Activated B cell treated with CpG ODN at 0.5 μM for 24 hours (primary cell): ENCODE measurements at regions of chr1 and their contacts with region 1.

Region 1: GRCh38 chr1:172532700-172533509 is at the start of gene SUCO:
- DNase-seq: peak; percentile 99
- ATAC-seq: peak; percentile 82
- H3K4me3 Mint-ChIP-seq: peak within 1 kb of the TSS; percentile 98
- H3K27ac Mint-ChIP-seq: peak within 1 kb of the TSS; percentile 99
- H3K4me1 Mint-ChIP-seq: peaks cover 48% of the 10 kb centered on the region
- H3K27me3 Mint-ChIP-seq: peaks cover 4% of the 10 kb centered on the region
- CTCF ChIP-seq: no peak
- total RNA-seq, gene SUCO: 35.2 and 47.1 TPM in 2 replicates

Region 2: GRCh38 chr1:171741872-171742576 is 790.9 kb before region 1 on chr1 and contains the start of gene VAMP4:
- CTCF ChIA-PET with region 1: no interaction called
- POLR2A ChIA-PET with region 1: interaction called, 11 read pairs
- intact Hi-C with region 1: loop called (anchors 1 kb)
- DNase-seq: peak; percentile 82
- ATAC-seq: peak; percentile 93
- H3K4me3 Mint-ChIP-seq: peak within 1 kb of the TSS; percentile 100
- H3K27ac Mint-ChIP-seq: peak within 1 kb of the TSS; percentile 100
- H3K4me1 Mint-ChIP-seq: peaks cover 37% of the 10 kb centered on the region
- H3K27me3 Mint-ChIP-seq: no peaks in the 10 kb centered on the region
- CTCF ChIP-seq: no peak
- total RNA-seq, gene VAMP4: 9.0 and 10.5 TPM in 2 replicates

Region 3: GRCh38 chr1:172180501-172181285 is 352.2 kb before region 1 on chr1:
- CTCF ChIA-PET with region 1: no interaction called
- POLR2A ChIA-PET with region 1: interaction called, 3 read pairs
- intact Hi-C with region 1: loop called (anchors 1 kb)
- DNase-seq: no peak
- ATAC-seq: peak; percentile 76
- H3K4me3 Mint-ChIP-seq: peak overlapping the region; percentile 79
- H3K27ac Mint-ChIP-seq: peak overlapping the region; percentile 97
- H3K4me1 Mint-ChIP-seq: peaks cover 53% of the 10 kb centered on the region
- H3K27me3 Mint-ChIP-seq: no peaks in the 10 kb centered on the region
- CTCF ChIP-seq: no peak

Region 4: DNA sequence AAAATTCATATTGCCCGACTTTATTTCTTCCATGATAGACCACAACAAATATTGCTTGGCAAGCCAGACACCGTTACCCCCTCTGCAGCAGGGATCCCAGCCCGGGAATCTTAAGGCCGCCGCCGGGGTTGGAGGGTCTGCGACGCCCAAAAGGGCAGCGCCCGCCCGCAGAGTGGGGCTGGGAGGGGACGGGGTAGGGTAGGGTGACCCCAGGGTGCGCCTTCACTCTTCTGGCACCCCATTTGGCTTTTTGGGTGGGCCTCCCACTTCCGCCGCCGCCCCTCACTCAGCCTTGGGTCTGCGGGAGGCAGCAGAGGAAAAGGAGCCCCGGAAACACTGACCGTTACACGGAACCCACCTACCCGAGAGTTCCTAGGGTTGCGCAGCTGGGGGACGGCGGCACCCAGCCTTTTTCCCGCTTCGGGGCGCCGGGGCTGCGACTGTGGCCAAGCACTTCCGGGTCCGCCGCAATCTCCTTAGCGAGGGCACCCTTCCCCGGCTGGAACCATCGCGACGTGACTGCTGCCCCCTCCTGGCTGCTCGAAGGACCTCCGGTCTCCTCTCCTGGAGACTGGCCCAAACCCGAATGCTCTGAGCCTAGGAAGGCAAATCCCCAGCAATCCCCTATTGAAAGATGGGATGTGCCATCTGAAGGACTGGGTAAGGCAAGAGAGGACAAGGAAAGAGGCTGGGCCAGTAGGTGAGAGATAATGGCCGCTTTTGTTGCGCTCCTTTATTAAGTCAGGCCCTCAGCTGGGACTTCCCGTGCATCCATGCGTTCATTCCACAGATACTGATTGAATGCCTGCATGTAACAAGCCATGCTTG is 89.1 kb before region 1 on chr1 and contains the start of gene PIGC:
- CTCF ChIA-PET with region 1: interaction called, 3 read pairs
- POLR2A ChIA-PET with region 1: interaction called, 3 read pairs
- intact Hi-C with region 1: loop called (anchors 1 kb)
- DNase-seq: peak; percentile 80
- ATAC-seq: peak; percentile 99
- H3K4me3 Mint-ChIP-seq: peak within 1 kb of the TSS; percentile 90
- H3K27ac Mint-ChIP-seq: peak within 1 kb of the TSS; percentile 84
- H3K4me1 Mint-ChIP-seq: peaks cover 36% of the 10 kb centered on the region
- H3K27me3 Mint-ChIP-seq: no peaks in the 10 kb centered on the region
- CTCF ChIP-seq: no peak
- total RNA-seq, gene PIGC: 24.2 TPM in 2 replicates

Region 5: DNA sequence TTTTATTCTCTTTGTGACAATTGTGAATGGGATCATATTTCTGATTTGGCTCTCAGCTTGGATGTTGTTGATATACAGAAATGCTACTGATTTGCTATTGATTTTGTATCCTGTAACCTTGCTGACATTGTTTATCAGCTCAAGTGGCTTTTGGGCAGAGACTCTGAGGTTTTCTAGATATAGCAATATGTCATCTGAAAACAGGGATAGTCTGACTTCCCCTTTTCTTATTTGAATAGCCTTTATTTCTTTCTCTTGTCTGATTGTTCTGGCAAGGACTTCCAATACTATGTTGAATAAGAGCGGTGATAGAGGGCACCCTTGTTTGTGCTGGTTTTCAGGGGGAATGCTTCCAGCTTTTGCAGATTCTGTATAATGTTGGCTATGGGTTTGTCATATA is 276.8 kb after region 1 on chr1:
- CTCF ChIA-PET with region 1: no interaction called
- POLR2A ChIA-PET with region 1: no interaction called
- intact Hi-C with region 1: no loop called
- DNase-seq: no peak
- ATAC-seq: no peak
- H3K4me3 Mint-ChIP-seq: no peak overlapping the region
- H3K27ac Mint-ChIP-seq: no peak overlapping the region
- H3K4me1 Mint-ChIP-seq: peaks cover 21% of the 10 kb centered on the region
- H3K27me3 Mint-ChIP-seq: no peaks in the 10 kb centered on the region
- CTCF ChIP-seq: no peak

Region 6: DNA sequence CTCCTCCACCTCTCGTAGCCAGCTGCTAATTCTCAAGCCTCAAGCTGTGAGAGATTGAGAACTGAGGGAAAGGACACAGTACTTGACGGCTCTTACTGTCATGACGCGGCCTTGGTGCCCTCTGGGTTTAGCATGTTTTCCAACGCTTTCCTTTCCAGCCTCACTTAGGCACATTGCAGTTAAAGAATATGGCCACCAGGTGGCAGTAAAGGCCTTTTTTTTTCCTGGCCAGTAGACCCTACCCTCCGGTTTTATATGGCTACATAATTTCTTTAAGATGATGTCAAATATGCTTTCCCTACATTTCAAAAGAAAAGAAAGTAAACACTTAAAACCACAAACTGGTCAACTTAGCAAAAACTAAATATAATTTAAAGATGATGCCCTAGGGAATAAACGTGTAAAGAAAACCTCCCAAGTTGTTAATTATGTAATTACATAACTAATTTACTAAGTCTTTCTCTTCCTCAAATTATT is 887.5 kb after region 1 on chr1:
- CTCF ChIA-PET with region 1: no interaction called
- POLR2A ChIA-PET with region 1: no interaction called
- intact Hi-C with region 1: loop called (anchors 2 kb)
- DNase-seq: no peak
- ATAC-seq: peak; percentile 21
- H3K4me3 Mint-ChIP-seq: peak overlapping the region; percentile 60
- H3K27ac Mint-ChIP-seq: peak overlapping the region; percentile 95
- H3K4me1 Mint-ChIP-seq: peaks cover 63% of the 10 kb centered on the region
- H3K27me3 Mint-ChIP-seq: no peaks in the 10 kb centered on the region
- CTCF ChIP-seq: no peak

Region 7: GRCh38 chr1:173824331-173825081 is 1291.6 kb after region 1 on chr1 and contains the starts of genes CENPL and DARS2:
- CTCF ChIA-PET with region 1: no interaction called
- POLR2A ChIA-PET with region 1: interaction called, 4 read pairs
- intact Hi-C with region 1: loop called (anchors 1 kb)
- DNase-seq: peak; percentile 80
- ATAC-seq: peak; percentile 89
- H3K4me3 Mint-ChIP-seq: peak within 1 kb of the TSS; percentile 95
- H3K27ac Mint-ChIP-seq: peak within 1 kb of the TSS; percentile 97
- H3K4me1 Mint-ChIP-seq: peaks cover 28% of the 10 kb centered on the region
- H3K27me3 Mint-ChIP-seq: no peaks in the 10 kb centered on the region
- CTCF ChIP-seq: no peak
- total RNA-seq, gene CENPL: 12.7 and 14.0 TPM in 2 replicates
- total RNA-seq, gene DARS2: 24.0 and 26.0 TPM in 2 replicates

Region 8: DNA sequence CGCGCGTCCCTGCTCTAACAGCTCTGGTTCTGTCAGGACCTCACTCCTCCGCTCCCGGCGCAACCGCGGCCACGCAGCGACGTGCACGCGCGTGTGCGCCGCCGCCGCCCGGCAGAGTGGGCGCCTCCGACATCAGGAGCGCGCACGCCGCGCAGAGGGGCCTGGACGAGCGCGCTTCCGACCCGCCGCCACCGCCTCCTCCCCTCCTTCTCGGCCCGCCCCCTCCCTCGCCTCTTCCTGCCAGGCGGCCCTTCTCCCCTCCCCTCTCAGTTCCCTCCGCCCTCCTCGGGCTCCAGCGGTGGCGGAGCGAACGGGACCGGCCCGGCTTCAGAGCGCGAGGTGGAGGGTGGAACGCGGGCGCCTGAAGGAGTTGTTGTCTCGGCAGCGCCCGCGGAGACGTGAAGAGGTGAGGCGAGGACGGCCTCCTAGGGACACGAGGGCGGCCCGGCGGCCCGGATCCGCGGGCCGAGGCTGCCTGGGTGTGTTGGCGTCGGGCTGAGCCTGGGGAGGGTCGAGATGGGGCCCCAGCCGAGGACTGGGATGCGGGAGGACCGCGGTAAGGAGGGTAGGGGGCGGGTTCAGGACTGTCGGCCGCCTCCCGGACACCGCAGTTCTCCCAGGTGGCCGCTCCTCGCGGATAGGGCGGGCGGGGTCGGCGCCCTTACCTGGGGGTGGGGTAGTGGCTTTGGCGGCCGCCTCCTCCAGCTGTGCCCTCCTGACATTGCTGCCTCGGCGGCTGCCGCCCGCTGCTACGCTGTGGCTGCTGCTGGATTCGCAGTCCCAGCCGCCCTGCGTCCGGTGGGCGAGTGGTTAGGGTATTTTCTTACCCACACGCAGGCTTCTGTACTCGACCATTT is 1626.6 kb after region 1 on chr1 and contains the start of gene RABGAP1L:
- CTCF ChIA-PET with region 1: no interaction called
- POLR2A ChIA-PET with region 1: no interaction called
- intact Hi-C with region 1: loop called (anchors 1 kb)
- DNase-seq: peak; percentile 88
- ATAC-seq: peak; percentile 84
- H3K4me3 Mint-ChIP-seq: peak within 1 kb of the TSS; percentile 96
- H3K27ac Mint-ChIP-seq: peak within 1 kb of the TSS; percentile 99
- H3K4me1 Mint-ChIP-seq: peaks cover 72% of the 10 kb centered on the region
- H3K27me3 Mint-ChIP-seq: no peaks in the 10 kb centered on the region
- CTCF ChIP-seq: no peak
- total RNA-seq, gene RABGAP1L: 103 and 126 TPM in 2 replicates